GM23248 (cell line): ENCODE measurements at regions of chr10 and their contacts with region 1.

Region 1: DNA sequence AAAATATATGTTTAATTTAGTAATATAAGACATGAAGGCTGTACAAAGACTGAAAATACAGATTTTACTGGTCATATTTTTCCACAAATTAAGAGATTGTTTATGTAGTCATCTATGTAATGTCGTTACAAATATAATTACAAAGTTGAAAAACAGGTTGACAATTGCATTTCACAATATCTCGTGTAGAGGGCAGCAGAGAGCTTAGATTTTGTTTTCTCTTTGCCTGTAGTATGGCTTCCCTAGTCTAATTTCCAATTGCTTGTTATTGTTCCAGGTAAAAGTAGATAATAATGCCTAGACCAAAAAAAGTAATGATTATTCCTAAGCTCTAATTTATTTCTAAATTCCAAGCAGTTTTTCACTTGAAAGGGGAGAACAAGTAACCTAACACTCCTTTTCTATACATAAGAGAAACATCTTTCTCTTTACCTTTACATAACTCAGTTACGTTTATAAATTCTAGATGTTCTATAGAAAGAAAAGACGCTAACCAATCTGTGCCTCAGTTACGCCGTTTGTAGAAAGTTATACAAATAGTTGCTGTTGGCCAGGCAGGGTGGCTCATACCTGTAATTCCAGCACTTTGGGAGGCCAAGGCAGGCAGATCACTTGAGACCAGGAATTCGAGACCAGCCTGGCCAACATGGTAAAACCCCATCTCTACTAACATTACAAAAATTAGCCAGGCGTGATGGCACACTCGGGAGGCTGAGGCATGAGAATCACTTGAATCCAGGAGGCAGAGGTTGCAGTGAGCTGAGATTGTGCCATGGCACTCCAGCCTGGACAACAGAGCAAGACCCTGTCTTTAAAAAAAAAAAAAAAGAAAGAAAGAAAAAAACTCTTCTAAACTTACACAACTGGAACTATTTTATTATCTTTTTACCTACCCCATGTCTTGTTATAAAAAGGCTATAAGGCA is 30.0 kb downstream of the NET1 start:
- DNase-seq: peak; percentile 57
- H3K4me3 ChIP-seq: no peak overlapping the region
- H3K27ac ChIP-seq: no peak overlapping the region
- H3K4me1 ChIP-seq: peaks cover 6% of the 10 kb centered on the region
- H3K27me3 ChIP-seq: no peaks in the 10 kb centered on the region

Region 2: DNA sequence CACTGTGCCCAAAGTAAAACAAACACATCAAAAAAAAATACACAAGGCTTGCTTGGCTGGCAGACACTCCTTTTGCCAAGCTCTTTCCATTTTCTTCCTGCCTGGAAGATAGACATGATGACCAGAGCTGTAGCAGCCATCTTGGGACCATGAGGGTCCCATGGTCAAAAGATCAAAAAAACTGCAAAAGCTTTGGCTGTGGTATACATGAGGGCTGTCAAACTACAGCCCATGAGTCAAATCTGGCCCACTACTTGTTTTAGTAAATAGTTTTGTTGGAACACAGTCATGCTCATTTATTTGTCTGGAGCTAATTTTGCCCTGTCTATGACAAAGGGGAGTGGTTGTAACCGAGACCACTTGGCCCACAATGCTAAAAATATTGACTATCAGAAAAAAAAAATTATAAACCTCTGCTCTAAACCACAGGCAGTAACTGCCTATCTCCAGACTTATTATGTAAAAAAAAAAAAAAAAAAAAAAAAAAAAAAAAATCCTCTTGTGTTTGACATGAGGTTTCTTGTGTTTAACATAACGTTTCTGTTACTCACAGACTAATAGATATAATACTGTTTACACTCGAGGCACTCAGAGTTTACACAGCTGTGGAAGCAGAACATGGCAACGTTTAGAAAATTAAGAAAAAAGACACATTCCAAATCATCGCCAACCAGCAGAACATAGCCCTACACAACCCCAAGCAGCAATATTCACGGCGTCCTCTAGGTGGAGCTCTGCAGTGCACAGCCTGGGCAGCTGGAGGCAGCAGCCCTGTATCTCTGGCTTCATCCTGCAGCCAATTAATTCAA is 187.2 kb after region 1 on chr10:
- in situ Hi-C with region 1: loop called (anchors 5 kb)
- DNase-seq: peak; percentile 81
- H3K4me3 ChIP-seq: peak overlapping the region; percentile 69
- H3K27ac ChIP-seq: peak overlapping the region; percentile 44
- H3K4me1 ChIP-seq: peaks cover 18% of the 10 kb centered on the region
- H3K27me3 ChIP-seq: no peaks in the 10 kb centered on the region